Common myeloid progenitor, CD34-positive (primary cell): ENCODE measurements at regions of chr17 and their contacts with region 1.

Region 1: DNA sequence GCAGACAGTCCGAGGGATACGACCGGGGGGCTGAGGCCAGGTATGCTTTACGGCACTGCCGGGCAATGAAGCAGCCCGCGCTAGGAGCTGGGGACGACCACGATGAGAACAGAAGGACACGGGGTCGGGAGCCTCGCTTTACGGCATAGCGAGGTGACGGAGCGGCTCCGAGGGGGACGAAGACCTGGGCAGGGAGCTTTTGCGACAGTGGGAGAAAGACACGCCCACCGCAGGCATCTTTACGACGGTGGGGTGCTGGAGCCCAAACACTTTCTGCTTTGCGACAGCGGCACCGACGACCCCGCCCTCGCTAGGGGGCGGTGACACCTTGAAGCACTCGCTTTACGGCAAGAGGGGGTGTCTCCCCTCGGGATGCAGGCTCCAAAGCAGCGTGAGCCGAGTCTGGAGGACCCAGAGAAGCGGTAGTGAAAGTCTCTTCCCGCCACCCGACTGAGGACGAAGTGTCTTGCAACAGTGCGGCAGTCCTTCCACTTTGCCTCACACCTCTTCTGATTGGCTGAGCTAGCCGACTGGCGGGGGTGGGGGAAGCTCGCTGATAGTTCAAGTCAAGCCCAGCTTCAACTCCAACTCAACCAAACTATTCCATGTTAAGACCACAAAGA is 350 bp upstream of the NEURL4 start:
- DNase-seq: peak; percentile 99 to 100 (median 100)
- H3K4me3 ChIP-seq: peak overlapping the region; percentile 74 to 97 (median 90)
- H3K27ac ChIP-seq: peak overlapping the region; percentile 66 to 87
- H3K4me1 ChIP-seq: peaks cover 5 to 38% (median 33%) of the 10 kb centered on the region in 4 experiments
- H3K27me3 ChIP-seq: no peaks in the 10 kb centered on the region

Region 2: DNA sequence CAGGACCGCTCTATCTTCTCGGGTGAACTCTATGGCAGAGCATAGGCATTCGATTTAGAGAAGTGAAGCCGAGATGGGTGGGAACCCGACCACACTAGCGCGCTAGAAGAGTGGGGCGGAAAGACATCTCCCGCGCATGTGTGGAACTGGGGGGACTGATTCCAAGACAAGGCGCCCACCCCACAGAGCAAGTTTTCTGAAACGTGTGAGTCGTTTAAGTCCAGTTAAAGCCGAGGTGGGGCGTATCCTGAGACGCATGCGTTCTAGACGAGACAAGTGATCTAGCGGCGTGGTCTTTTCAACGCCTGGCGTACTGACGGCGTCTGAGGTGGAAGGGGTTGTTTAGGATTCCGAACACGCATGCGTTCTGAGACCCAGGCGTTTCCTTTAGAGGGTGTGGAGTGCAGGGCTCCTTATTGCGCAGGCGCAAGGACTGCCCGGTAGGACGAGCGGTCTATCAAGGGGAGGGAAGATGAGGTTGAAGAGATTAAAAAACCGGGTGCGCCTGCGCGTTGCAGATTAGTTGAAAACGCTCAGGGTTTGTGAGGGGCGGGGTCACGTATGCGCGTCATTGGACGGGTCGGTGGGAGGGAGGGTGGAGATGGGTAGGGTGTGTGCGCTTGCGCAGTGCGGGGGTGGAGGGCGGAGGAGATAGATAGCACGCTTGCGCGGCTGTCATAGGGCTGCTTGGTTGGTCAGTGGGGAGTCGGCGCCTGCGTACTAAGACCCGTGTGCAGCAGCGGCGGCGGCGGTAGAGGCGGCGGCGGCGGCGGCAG is 22.4 kb before region 1 on chr17 and contains the start of gene EIF5A:
- CTCF ChIA-PET with region 1: interaction called, 13 read pairs
- POLR2A ChIA-PET with region 1: interaction called, 4 read pairs
- DNase-seq: peak; percentile 100
- H3K4me3 ChIP-seq: peak within 1 kb of the TSS; percentile 67 to 99 (median 87)
- H3K27ac ChIP-seq: peak within 1 kb of the TSS; percentile 85 to 96
- H3K4me1 ChIP-seq: peaks cover 9 to 27% (median 20%) of the 10 kb centered on the region in 4 experiments
- H3K27me3 ChIP-seq: no peaks in the 10 kb centered on the region

Region 3: DNA sequence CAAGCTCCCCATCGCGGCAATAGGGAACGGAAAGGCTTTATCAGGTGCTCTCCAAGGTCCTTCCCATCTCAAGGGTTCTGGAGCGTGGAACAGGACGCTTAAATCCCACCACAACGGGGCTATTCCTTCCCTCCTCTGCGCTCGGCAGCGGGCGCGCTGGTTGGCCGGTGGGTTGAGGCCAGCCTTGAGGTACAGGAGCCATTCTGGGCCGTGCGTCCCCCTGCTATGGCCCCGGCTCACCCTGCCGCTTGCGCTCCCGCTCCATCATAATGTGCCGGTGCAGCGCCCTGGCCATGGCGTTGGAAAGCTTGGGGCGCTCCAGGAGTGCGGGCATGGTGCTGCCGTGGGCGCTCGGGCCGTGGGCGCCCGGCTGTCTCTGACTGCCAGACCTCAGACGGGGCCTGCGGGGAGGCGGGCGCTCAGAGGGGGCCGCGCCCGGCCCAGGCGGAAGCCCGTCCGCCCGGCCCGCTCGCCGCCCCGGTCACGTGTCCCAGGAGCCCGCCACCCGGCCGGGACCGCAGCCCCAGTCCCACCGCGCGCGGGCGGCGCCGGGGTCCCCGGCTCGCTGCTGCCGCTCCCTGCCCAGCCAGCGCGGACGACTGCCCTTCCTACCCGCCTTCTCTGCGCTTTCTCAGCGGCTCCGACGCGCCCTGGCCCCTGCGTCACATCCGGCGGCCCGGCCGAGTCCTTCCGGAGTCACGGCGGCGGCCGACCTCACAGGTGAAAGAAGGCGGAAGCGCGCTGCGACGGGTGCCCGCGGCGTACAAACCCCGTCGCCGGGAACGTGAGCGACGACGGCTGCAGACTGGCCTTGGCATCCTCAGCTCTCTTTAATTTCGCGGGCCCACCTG is 14.5 kb before region 1 on chr17 and contains the start of gene GPS2:
- CTCF ChIA-PET with region 1: interaction called, 314 read pairs
- POLR2A ChIA-PET with region 1: interaction called, 4 read pairs
- DNase-seq: peak; percentile 87 to 94 (median 92)
- H3K4me3 ChIP-seq: peak within 1 kb of the TSS; percentile 53 to 92 (median 74)
- H3K27ac ChIP-seq: peak within 1 kb of the TSS; percentile 62 to 79
- H3K4me1 ChIP-seq: peaks cover 10 to 41% (median 25%) of the 10 kb centered on the region in 4 experiments
- H3K27me3 ChIP-seq: no peaks in the 10 kb centered on the region